A673 (cell line): ENCODE measurements at regions of chr7 and their contacts with region 1.

Region 1: GRCh38 chr7:64775289-64775688 is 18.9 kb upstream of the ZNF138 start:
- DNase-seq: no peak
- H3K4me3 ChIP-seq: no peak overlapping the region
- H3K27ac ChIP-seq: no peak overlapping the region
- H3K4me1 ChIP-seq: no peaks in the 10 kb centered on the region
- H3K27me3 ChIP-seq: no peaks in the 10 kb centered on the region
- CTCF ChIP-seq: no peak

Region 2: DNA sequence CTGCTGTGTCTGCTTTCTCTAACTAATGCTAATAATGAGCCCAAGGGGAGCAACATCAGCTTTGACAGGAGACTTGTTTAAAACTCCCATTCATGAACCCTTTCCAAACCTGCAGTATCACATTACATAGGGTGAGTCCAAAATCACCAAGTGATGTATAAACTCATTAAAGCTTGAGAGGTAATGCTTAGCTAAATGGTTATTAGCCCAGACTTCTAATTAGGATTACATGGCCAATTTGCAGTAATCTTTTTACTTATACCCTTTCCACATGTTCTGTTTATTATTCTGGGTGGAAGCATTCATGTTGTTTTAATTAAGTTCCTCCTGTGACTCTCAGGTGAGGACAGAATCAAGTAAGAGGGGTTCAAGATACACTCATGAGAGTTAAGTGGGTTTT is 36.5 kb after region 1 on chr7:
- CTCF ChIA-PET with region 1: no interaction called
- POLR2A ChIA-PET with region 1: no interaction called
- intact Hi-C with region 1: loop called (anchors 5 kb)
- DNase-seq: no peak
- H3K4me3 ChIP-seq: no peak overlapping the region
- H3K27ac ChIP-seq: no peak overlapping the region
- H3K4me1 ChIP-seq: no peaks in the 10 kb centered on the region
- H3K27me3 ChIP-seq: no peaks in the 10 kb centered on the region
- CTCF ChIP-seq: no peak

Region 3: GRCh38 chr7:65325793-65326432 is 550.6 kb after region 1 on chr7:
- CTCF ChIA-PET with region 1: no interaction called
- POLR2A ChIA-PET with region 1: no interaction called
- intact Hi-C with region 1: no loop called
- DNase-seq: no peak
- H3K4me3 ChIP-seq: no peak overlapping the region
- H3K27ac ChIP-seq: no peak overlapping the region
- H3K4me1 ChIP-seq: no peaks in the 10 kb centered on the region
- H3K27me3 ChIP-seq: no peaks in the 10 kb centered on the region
- CTCF ChIP-seq: no peak